ENCODE measurements at regions of chr20 and their contacts with region 1.

Region 1: DNA sequence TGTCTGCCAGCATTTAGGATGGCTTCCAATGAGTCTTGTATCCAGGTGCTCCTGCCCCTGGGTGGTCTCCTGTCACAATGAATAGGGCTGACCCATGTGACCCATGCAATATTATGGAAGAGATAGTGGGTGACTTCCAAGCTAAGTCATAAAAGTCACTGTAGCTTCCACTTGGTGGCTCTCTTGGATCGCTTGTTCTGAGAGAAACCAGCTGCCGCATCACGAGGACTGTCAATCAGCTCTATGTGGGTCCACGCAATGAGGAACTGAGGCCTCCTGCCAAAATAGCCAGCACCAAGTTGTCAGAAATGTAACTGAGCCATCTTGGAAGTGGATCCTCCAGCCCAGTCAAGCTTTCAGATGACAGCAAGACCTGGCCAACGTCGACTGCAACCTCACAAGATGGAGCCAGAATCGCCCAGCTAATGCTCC is 14.9 kb upstream of the MATN4 start:
- DNase-seq: peak; percentile 70
- H3K4me3 Mint-ChIP-seq: peak overlapping the region; percentile 6
- H3K27ac Mint-ChIP-seq: peak overlapping the region; percentile 5
- H3K4me1 Mint-ChIP-seq: peaks cover 21% of the 10 kb centered on the region
- H3K27me3 Mint-ChIP-seq: peaks cover 17% of the 10 kb centered on the region
- CTCF ChIP-seq: peak; percentile 65

Region 2: DNA sequence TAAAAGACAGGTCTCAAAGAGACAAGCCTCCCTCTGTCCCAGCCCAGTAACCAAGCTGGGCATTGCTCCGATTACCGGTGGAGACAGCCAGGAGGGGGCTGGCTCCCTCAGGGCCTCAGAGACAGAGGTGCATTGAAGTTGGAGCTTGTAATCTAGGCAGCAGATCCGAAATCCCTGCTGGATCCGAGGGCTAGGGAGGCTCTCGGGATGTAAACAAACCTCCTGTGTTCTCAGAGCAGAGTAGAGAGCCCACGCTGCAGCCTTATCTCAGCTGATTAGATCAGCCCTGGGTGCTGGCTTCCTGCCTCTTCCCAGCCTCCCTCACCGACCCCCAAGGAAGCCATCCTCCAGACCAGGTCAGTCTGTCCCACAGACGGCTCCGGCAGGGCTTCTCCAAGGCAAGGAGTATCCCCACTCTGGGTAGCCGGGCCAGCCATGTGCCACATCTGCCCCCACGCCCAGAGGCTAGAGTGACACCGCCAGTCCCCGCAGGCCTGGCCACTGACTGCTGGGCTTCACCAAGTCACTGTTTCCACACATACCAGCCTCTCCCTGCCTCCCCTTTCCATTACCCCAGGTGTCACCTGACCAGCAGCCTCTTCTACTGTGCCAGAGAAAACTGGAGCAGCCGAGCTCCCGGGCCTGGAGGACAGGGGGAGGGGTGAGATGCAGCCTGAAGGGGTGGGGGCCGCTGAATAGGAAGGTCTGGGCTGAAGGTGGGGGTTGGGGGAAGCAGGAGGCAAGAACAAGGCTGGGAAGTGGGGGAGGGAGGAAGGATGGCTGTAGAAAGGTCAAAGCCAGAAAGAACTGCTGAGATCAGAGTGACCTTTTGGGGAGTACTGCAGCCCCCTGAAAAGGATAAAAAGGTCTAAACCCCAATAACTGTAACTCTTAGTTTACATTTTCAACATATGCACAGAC is 19.2 kb after region 1 on chr20:
- CTCF ChIA-PET with region 1: interaction called, 51 read pairs
- intact Hi-C with region 1: loop called (anchors 2 kb)
- DNase-seq: peak; percentile 80
- H3K4me3 Mint-ChIP-seq: peak overlapping the region; percentile 95
- H3K27ac Mint-ChIP-seq: peak overlapping the region; percentile 99
- H3K4me1 Mint-ChIP-seq: peaks cover 90% of the 10 kb centered on the region
- H3K27me3 Mint-ChIP-seq: no peaks in the 10 kb centered on the region
- CTCF ChIP-seq: no peak

Region 3: DNA sequence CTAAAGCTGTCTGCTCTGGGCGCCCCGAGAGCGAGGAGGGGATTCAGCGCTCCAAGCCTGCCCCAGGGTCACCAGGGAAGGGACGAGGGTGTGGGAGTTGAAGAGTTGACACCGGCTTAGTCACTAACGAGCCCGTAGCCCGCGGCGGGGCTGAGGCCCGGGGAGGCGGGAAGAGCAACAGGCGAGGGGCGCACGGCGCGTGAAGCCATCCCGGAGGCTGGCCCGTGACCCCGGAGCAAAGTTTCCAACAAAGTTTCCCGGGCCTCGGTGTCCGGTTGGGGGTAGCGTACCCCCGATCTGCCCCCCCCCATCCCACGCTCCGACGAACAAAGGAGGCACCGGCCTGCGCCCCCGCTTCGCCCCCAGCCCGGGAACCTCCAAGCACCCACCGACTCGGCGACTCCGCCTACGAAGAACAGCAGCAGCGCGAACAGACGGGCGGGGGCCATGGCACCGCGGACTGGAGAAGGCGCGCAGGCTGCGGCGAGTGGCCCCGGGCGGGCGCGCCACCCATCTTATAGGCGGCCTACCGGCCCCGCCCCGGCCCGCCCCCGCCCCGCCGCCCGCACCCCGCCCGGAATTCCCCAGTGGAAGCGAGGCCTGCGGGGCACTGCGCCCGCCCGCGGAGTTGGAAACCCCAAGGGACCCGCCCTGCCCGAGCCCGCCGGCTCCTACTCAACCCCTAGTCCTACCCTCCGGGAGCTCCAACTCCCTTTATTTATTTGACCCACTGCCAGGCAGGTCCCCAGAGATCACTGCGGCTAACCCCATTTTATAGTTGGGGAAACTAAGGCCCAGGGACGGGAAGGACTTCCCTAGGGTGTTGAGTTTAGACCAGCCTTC is 25.2 kb after region 1 on chr20 and contains the start of gene SDC4:
- CTCF ChIA-PET with region 1: interaction called, 51 read pairs
- intact Hi-C with region 1: loop called (anchors 2 kb)
- DNase-seq: peak; percentile 89
- H3K4me3 Mint-ChIP-seq: peak within 1 kb of the TSS; percentile 95
- H3K27ac Mint-ChIP-seq: peak within 1 kb of the TSS; percentile 99
- H3K4me1 Mint-ChIP-seq: peaks cover 30% of the 10 kb centered on the region
- H3K27me3 Mint-ChIP-seq: no peaks in the 10 kb centered on the region
- CTCF ChIP-seq: no peak
- total RNA-seq, gene SDC4: 238 and 256 TPM in 2 replicates

Region 4: GRCh38 chr20:45362804-45363610 is 40.0 kb after region 1 on chr20 and contains the start of gene SYS1:
- CTCF ChIA-PET with region 1: interaction called, 27 read pairs
- intact Hi-C with region 1: loop called (anchors 2 kb)
- DNase-seq: peak; percentile 100
- H3K4me3 Mint-ChIP-seq: peak within 1 kb of the TSS; percentile 91
- H3K27ac Mint-ChIP-seq: peak within 1 kb of the TSS; percentile 92
- H3K4me1 Mint-ChIP-seq: peaks cover 59% of the 10 kb centered on the region
- H3K27me3 Mint-ChIP-seq: no peaks in the 10 kb centered on the region
- CTCF ChIP-seq: peak; percentile 94
- total RNA-seq, gene SYS1: 42.1 and 45.5 TPM in 2 replicates

Region 5: DNA sequence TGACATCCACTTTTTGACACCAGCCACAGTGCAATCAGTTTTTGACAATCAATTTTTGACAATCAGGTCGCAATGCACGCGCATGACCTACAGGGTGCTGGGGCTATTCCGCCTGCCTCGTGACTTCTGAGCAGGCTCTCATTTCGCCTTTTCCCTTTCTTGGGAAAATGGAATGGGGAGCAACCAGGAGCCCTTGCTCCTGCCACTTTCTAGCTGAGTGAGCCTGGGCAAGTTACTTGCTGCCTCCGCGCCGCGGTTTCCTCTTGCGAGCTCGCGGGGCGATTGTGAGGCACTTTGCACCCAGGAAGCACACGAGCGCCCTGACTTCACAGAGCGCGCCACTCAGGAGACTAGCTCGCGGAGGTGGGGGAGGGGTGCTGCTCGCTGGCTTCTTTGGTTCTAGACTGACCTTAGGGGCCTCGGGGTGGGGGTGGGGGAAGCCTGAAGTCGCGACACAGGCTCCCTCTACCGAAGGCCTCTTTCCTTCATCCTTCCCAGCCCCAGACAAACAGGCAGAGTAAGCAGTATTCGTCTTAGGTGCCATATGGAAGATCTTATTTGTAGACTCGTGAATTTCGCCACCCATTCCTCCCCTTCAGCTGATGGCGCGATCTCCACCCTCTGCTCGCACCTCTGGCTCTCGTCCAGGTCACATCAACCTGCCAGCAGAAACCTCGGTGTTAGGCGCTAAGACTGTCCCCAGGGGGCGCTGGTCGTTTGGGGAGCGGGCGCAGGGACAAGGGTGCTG is 50.6 kb after region 1 on chr20:
- CTCF ChIA-PET with region 1: interaction called, 37 read pairs
- intact Hi-C with region 1: no loop called
- DNase-seq: peak; percentile 98
- H3K4me3 Mint-ChIP-seq: peak overlapping the region; percentile 84
- H3K27ac Mint-ChIP-seq: peak overlapping the region; percentile 70
- H3K4me1 Mint-ChIP-seq: no peaks in the 10 kb centered on the region
- H3K27me3 Mint-ChIP-seq: no peaks in the 10 kb centered on the region
- CTCF ChIP-seq: peak; percentile 94

Region 6: GRCh38 chr20:45742581-45742980 is 419.6 kb after region 1 on chr20:
- CTCF ChIA-PET with region 1: no interaction called
- intact Hi-C with region 1: no loop called
- DNase-seq: no peak
- H3K4me3 Mint-ChIP-seq: no peak overlapping the region
- H3K27ac Mint-ChIP-seq: no peak overlapping the region
- H3K4me1 Mint-ChIP-seq: no peaks in the 10 kb centered on the region
- H3K27me3 Mint-ChIP-seq: peaks cover 45% of the 10 kb centered on the region
- CTCF ChIP-seq: no peak

Region 7: GRCh38 chr20:45924391-45925261 is 601.7 kb after region 1 on chr20:
- CTCF ChIA-PET with region 1: no interaction called
- intact Hi-C with region 1: no loop called
- DNase-seq: no peak
- H3K4me3 Mint-ChIP-seq: no peak overlapping the region
- H3K27ac Mint-ChIP-seq: no peak overlapping the region
- H3K4me1 Mint-ChIP-seq: no peaks in the 10 kb centered on the region
- H3K27me3 Mint-ChIP-seq: peaks cover 69% of the 10 kb centered on the region
- CTCF ChIP-seq: no peak

Measured in Calu3 (cell line).